HepG2 (cell line): ENCODE measurements at regions of chr20 and their contacts with region 1.

Region 1: GRCh38 chr20:22586645-22587310 is 2.4 kb upstream of the FOXA2 start:
- DNase-seq: peak; percentile 56
- ATAC-seq: peak; percentile 49
- H3K4me3 ChIP-seq: peak overlapping the region; percentile 58 to 80 (median 64)
- H3K27ac ChIP-seq: no peak overlapping the region
- H3K4me1 ChIP-seq: peaks cover 33% of the 10 kb centered on the region
- H3K27me3 ChIP-seq: peaks cover 3 to 36% of the 10 kb centered on the region in 2 experiments
- CTCF ChIP-seq: peak; percentile 96
- EP300 ChIP-seq: peak in 1 of 2 experiments; percentile 50; a peak in 1 of 4 replicates
- POLR2A ChIP-seq: no peak
- RAD21 ChIP-seq: peak; percentile 100

Region 2: GRCh38 chr20:22385602-22386305 is 201.0 kb before region 1 on chr20:
- CTCF ChIA-PET with region 1: interaction called, 27 read pairs
- POLR2A ChIA-PET with region 1: no interaction called
- in situ Hi-C with region 1: loop called (anchors 5 kb)
- intact Hi-C with region 1: loop called (anchors 1 kb)
- DNase-seq: peak; percentile 75
- ATAC-seq: peak; percentile 94
- H3K4me3 ChIP-seq: no peak overlapping the region
- H3K27ac ChIP-seq: no peak overlapping the region
- H3K4me1 ChIP-seq: peaks cover 17% of the 10 kb centered on the region
- H3K27me3 ChIP-seq: peaks cover 0 to 45% of the 10 kb centered on the region in 2 experiments; a peak in 3 of 5 replicates
- CTCF ChIP-seq: peak; percentile 92
- EP300 ChIP-seq: no peak
- POLR2A ChIP-seq: no peak
- RAD21 ChIP-seq: peak; percentile 95

Region 3: GRCh38 chr20:22430154-22430745 is 156.5 kb before region 1 on chr20:
- CTCF ChIA-PET with region 1: interaction called, 4 read pairs
- POLR2A ChIA-PET with region 1: interaction called, 50 read pairs
- in situ Hi-C with region 1: no loop called
- intact Hi-C with region 1: loop called (anchors 1 kb)
- DNase-seq: peak; percentile 92
- ATAC-seq: peak; percentile 67
- H3K4me3 ChIP-seq: peak overlapping the region; percentile 45 to 67 (median 67)
- H3K27ac ChIP-seq: peak overlapping the region; percentile 96
- H3K4me1 ChIP-seq: peaks cover 75% of the 10 kb centered on the region
- H3K27me3 ChIP-seq: no peaks in the 10 kb centered on the region; a peak in 1 of 5 replicates
- CTCF ChIP-seq: no peak
- EP300 ChIP-seq: peak; percentile 44 to 54; a peak in 3 of 4 replicates
- POLR2A ChIP-seq: peak; percentile 18 to 69
- RAD21 ChIP-seq: no peak

Region 4: GRCh38 chr20:22490287-22491193 is 96.2 kb before region 1 on chr20:
- CTCF ChIA-PET with region 1: interaction called, 27 read pairs
- POLR2A ChIA-PET with region 1: interaction called, 116 read pairs
- in situ Hi-C with region 1: no loop called
- intact Hi-C with region 1: loop called (anchors 1 kb)
- DNase-seq: peak; percentile 100
- ATAC-seq: peak; percentile 99
- H3K4me3 ChIP-seq: peak overlapping the region; percentile 41 to 61 (median 59)
- H3K27ac ChIP-seq: peak overlapping the region; percentile 84
- H3K4me1 ChIP-seq: peaks cover 47% of the 10 kb centered on the region
- H3K27me3 ChIP-seq: no peaks in the 10 kb centered on the region
- CTCF ChIP-seq: peak; percentile 81
- EP300 ChIP-seq: peak; percentile 81 to 92
- POLR2A ChIP-seq: peak; percentile 58 to 75
- RAD21 ChIP-seq: peak; percentile 79

Region 5: GRCh38 chr20:22533823-22534751 is 52.7 kb before region 1 on chr20:
- CTCF ChIA-PET with region 1: no interaction called
- POLR2A ChIA-PET with region 1: interaction called, 21 read pairs
- in situ Hi-C with region 1: no loop called
- intact Hi-C with region 1: loop called (anchors 1 kb)
- DNase-seq: peak; percentile 97
- ATAC-seq: peak; percentile 98
- H3K4me3 ChIP-seq: no peak overlapping the region
- H3K27ac ChIP-seq: peak overlapping the region; percentile 77
- H3K4me1 ChIP-seq: peaks cover 89% of the 10 kb centered on the region
- H3K27me3 ChIP-seq: no peaks in the 10 kb centered on the region
- CTCF ChIP-seq: peak; percentile 48
- EP300 ChIP-seq: peak; percentile 80 to 89; a peak in 3 of 4 replicates
- POLR2A ChIP-seq: 0 out of 4 replicates have a peak, but pooled peaks have one; percentile 26 to 48
- RAD21 ChIP-seq: peak; percentile 56; the same call in 1 of the 2 replicates

Region 6: DNA sequence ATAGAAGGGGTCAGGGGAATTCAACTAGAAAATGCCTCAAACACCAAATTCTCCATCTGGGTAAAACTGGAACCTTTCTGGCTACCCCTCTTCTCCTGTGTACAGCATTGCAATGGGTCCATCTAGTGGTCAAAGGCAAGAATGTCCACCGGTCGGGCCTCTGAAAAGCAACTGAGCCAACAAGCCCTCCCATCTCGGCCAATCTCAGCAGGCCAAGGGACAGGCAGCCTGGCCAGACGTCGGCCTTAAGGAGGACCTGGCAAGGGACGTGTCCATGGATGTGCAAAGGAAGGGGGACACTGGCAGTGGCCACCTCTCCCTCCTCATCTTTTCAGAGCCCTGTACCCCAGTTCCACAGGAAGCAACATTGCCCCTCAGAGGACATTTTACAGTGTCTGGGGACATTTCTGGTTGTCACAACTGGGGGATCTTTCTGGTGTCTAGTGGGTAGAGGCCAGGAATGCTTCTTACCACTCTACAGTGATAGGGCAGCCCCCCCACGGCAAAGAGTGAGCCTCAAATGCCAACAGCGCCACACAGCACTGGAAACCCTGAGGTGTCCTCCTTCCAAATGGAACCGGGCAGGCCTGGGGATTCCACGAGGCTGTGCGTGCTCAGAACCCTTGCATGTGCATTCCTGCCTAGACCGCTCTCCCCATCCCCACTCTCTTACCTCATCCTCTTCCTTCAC is 97.4 kb after region 1 on chr20:
- CTCF ChIA-PET with region 1: interaction called, 14 read pairs
- POLR2A ChIA-PET with region 1: interaction called, 4 read pairs
- in situ Hi-C with region 1: loop called (anchors 5 kb)
- intact Hi-C with region 1: loop called (anchors 1 kb)
- DNase-seq: peak; percentile 84
- ATAC-seq: peak; percentile 91
- H3K4me3 ChIP-seq: no peak overlapping the region
- H3K27ac ChIP-seq: no peak overlapping the region
- H3K4me1 ChIP-seq: peaks cover 18% of the 10 kb centered on the region
- H3K27me3 ChIP-seq: peaks cover 0 to 3% of the 10 kb centered on the region in 2 experiments; a peak in 1 of 5 replicates
- CTCF ChIP-seq: peak; percentile 98
- EP300 ChIP-seq: no peak
- POLR2A ChIP-seq: no peak
- RAD21 ChIP-seq: peak; percentile 99